Activated CD4-positive, alpha-beta T cell treated with anti-CD3 and anti-CD28 coated beads, Interleukin-2, amount 10 ng/mL, durations not matched to agents 24 days and 14 days (primary cell): ENCODE measurements at regions of chr10 and their contacts with region 1.

Region 1: DNA sequence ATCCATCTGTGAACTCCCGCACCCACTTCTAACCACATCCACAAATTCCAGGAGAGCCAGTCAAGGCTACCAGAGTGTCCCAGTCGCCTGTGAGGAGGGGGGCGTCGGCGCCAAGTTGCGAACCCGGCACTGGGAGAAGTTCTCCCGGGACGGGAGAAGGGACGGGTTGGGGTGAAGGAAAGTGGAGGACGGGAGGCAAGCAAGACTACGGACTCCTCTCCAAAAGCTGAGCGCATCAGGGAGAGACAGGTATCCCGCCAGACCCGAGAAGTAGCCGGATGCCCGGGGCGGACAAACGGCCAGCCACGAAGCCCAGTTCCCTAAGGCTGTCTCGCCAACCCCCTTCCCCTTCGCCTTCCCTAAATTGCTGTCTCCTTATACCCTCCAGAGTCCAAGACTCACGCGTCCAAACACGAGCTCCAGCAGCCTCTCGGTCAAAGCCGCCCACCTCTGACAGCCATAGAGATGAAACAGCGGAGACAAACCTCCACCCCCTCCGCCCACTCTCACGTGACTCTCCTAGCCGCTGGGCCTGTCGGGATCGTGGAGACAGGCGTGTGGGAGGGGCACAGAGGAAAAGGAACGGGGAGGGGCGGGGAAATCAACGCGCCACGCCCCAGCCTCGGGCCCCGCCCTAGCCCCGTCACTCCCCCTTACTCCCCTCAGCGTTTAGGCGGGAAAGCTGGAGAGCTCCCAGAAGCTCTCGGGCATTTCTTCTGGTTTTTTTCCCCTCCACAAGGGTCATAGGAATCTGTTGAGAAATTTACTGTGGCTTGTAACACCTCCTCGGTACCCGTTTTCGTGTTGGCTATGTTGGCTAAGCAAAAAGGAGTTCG is at the start of gene MICU1:
- DNase-seq: peak; percentile 98
- H3K4me3 Mint-ChIP-seq: peak within 1 kb of the TSS; percentile 94
- H3K27ac Mint-ChIP-seq: peak within 1 kb of the TSS; percentile 96
- H3K4me1 Mint-ChIP-seq: peaks cover 7% of the 10 kb centered on the region
- H3K27me3 Mint-ChIP-seq: no peaks in the 10 kb centered on the region
- total RNA-seq, gene MICU1: 36.1 and 40.7 TPM in 2 replicates

Region 2: GRCh38 chr10:71850637-71851464 is 775.0 kb before region 1 on chr10 and contains the start of gene PSAP:
- intact Hi-C with region 1: loop called (anchors 5 kb)
- DNase-seq: peak; percentile 100
- H3K4me3 Mint-ChIP-seq: peak within 1 kb of the TSS; percentile 93
- H3K27ac Mint-ChIP-seq: peak within 1 kb of the TSS; percentile 83
- H3K4me1 Mint-ChIP-seq: peaks cover 35% of the 10 kb centered on the region
- H3K27me3 Mint-ChIP-seq: no peaks in the 10 kb centered on the region
- total RNA-seq, gene PSAP: 97.9 and 99.9 TPM in 2 replicates

Region 3: GRCh38 chr10:72563327-72563932 is 62.4 kb before region 1 on chr10:
- intact Hi-C with region 1: loop called (anchors 1 kb)
- DNase-seq: peak; percentile 79
- H3K4me3 Mint-ChIP-seq: peak overlapping the region; percentile 75
- H3K27ac Mint-ChIP-seq: peak overlapping the region; percentile 96
- H3K4me1 Mint-ChIP-seq: peaks cover 41% of the 10 kb centered on the region
- H3K27me3 Mint-ChIP-seq: no peaks in the 10 kb centered on the region

Region 4: DNA sequence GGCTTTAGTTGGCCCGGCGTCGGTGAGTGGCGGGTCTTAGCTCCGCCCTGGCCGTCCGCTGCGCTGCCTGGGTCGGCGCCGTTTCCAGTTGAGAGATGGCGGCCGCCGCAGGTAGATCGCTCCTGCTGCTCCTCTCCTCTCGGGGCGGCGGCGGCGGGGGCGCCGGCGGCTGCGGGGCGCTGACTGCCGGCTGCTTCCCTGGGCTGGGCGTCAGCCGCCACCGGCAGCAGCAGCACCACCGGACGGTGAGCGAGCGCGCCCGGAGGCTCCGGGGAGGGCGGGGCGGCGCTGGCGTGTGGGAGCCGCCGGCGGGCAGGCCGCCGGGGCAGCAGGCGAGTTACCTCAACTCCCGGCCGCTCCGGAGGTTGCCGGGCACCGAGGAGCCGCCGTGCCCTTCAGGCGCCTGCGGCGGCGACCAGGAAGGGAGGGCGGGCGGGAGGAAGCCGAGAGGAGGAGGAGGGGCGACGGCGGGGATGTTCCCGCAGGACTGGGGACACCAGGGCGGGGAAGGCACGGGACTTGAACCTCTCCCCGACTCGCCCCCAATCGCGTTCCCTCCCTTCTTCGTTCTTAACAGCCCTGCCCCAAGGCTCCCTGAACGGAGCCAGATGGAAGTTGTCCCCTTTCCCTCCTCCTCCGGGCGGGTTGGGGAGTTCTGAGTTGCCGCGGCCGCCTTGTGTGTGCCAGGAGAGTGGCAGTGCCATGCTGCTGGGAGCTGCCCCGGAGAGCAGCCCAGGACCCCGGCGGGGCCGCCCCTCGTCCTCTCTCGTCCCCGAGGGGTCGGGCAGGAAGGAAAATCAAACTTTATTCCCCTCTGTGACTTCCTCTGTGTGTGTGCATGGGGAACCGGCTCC is 66.5 kb after region 1 on chr10 and contains the start of gene MCU:
- intact Hi-C with region 1: loop called (anchors 2 kb)
- DNase-seq: peak; percentile 98
- H3K4me3 Mint-ChIP-seq: peak within 1 kb of the TSS; percentile 88
- H3K27ac Mint-ChIP-seq: peak within 1 kb of the TSS; percentile 54
- H3K4me1 Mint-ChIP-seq: peaks cover 29% of the 10 kb centered on the region
- H3K27me3 Mint-ChIP-seq: peaks cover 8% of the 10 kb centered on the region
- total RNA-seq, gene MCU: 13.5 and 15.9 TPM in 2 replicates

Region 5: GRCh38 chr10:73167783-73168464 is 542.1 kb after region 1 on chr10 and contains the starts of genes ECD and FAM149B1:
- intact Hi-C with region 1: loop called (anchors 10 kb)
- DNase-seq: peak; percentile 98
- H3K4me3 Mint-ChIP-seq: peak within 1 kb of the TSS; percentile 97
- H3K27ac Mint-ChIP-seq: peak within 1 kb of the TSS; percentile 99
- H3K4me1 Mint-ChIP-seq: peaks cover 35% of the 10 kb centered on the region
- H3K27me3 Mint-ChIP-seq: no peaks in the 10 kb centered on the region
- total RNA-seq, gene ECD: 38.5 and 40.7 TPM in 2 replicates
- total RNA-seq, gene FAM149B1: 10.5 and 11.5 TPM in 2 replicates

Region 6: GRCh38 chr10:73246783-73247508 is 621.1 kb after region 1 on chr10 and contains the start of gene DNAJC9:
- intact Hi-C with region 1: loop called (anchors 10 kb)
- DNase-seq: peak; percentile 99
- H3K4me3 Mint-ChIP-seq: peak within 1 kb of the TSS; percentile 98
- H3K27ac Mint-ChIP-seq: peak within 1 kb of the TSS; percentile 97
- H3K4me1 Mint-ChIP-seq: peaks cover 55% of the 10 kb centered on the region
- H3K27me3 Mint-ChIP-seq: no peaks in the 10 kb centered on the region
- total RNA-seq, gene DNAJC9: 54.2 and 56.6 TPM in 2 replicates